GM10248 (cell line): ENCODE measurements at regions of chr18 and their contacts with region 1.

Region 1: GRCh38 chr18:72672364-72673184 is 128.4 kb upstream of the CBLN2 start:
- DNase-seq: peak; percentile 29
- CTCF ChIP-seq: peak; percentile 72

Region 2: GRCh38 chr18:72652990-72653593 is 19.5 kb before region 1 on chr18:
- CTCF ChIA-PET with region 1: interaction called, 40 read pairs
- POLR2A ChIA-PET with region 1: no interaction called
- DNase-seq: peak; percentile 48
- CTCF ChIP-seq: peak; percentile 63

Region 3: GRCh38 chr18:72692086-72692485 is 19.5 kb after region 1 on chr18:
- CTCF ChIA-PET with region 1: interaction called, 26 read pairs
- POLR2A ChIA-PET with region 1: no interaction called
- DNase-seq: no peak
- CTCF ChIP-seq: no peak

Region 4: GRCh38 chr18:72700961-72701718 is 28.6 kb after region 1 on chr18:
- CTCF ChIA-PET with region 1: interaction called, 11 read pairs
- POLR2A ChIA-PET with region 1: no interaction called
- DNase-seq: no peak
- CTCF ChIP-seq: peak; percentile 50